Ovary (tissue), 10 donors: ENCODE measurements at regions of chr1 and their contacts with region 1.

Region 1: DNA sequence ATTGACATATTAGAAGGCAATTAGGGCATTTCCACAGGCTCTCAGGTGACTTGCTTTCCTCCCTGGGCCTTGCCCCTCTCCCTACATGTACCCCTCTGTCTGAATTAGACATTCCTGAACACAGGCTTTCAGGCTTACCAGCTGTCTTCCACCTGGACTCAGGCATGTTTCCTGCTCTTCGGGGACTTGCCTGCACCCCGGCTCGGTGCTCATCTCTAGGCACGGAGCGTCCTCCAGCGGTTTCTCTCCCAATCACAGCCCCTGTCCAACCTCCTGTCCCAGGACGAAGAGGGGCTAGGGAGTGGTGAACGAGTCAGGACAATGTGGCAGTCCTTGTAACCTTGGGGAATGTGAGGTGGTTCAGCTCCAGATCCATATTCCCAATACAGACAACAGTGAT is 4.2 kb downstream of the PROK1 start:
- DNase-seq: no peak
- H3K4me3 ChIP-seq: no peak overlapping the region
- H3K27ac ChIP-seq: no peak overlapping the region
- H3K4me1 ChIP-seq: peaks cover 17% of the 10 kb centered on the region
- H3K27me3 ChIP-seq: no peaks in the 10 kb centered on the region
- CTCF ChIP-seq: no peak
- EP300 ChIP-seq: no peak
- POLR2A ChIP-seq: no peak

Region 2: DNA sequence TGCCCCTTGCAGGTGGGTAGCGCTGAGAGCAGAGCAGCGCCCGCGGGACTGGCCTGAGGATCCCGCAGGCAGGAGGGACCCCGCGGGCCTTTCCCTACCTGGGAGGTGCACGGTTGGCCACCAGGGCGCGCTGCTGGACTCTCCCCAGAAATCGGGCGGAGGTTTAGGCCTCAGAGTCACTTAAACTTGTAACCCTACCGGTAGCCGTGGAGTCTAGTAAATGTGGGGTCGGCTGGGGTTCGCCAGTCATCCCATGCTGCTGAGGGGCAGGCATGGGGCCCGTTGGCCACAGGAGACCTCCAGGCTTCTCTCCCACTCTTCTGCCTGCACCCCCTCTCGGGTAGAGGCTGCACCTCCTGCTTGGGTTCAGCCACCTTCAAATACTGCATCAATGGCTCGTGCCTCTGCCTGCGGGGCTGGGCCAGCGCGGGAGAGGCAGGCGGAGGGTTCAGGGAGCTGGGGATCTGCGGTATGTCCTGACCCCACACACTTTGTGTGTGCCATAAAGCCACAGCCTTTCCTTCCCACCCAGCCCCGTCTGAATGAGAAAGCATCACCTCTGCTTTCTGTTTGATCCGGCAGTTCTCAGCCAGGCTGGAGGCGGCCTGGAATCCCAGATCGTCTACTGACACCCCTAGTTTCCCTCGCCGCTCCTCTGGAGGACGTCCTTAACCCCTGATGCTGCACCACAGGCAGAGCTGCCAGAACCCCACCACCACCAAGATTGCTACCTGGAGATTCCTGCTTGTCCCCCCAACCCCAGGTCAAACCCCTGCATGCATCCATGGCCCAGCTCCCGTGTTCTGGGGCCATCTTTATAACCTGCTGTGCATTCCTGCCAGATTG is 811.5 kb before region 1 on chr1:
- intact Hi-C with region 1: no loop called
- DNase-seq: peak; percentile 75 to 92 (median 88)
- H3K4me3 ChIP-seq: no peak overlapping the region
- H3K27ac ChIP-seq: peak overlapping the region in 1 of 2 donors; percentile 35
- H3K4me1 ChIP-seq: no peaks in the 10 kb centered on the region
- H3K27me3 ChIP-seq: no peaks in the 10 kb centered on the region
- CTCF ChIP-seq: peak; percentile 63 to 87 (median 71)
- EP300 ChIP-seq: no peak
- POLR2A ChIP-seq: no peak

Region 3: GRCh38 chr1:110412576-110412975 is 42.6 kb before region 1 on chr1:
- intact Hi-C with region 1: loop called in 3 of 4 experiments (anchors 2 to 5 kb)
- DNase-seq: peak; percentile 87 to 93 (median 90)
- H3K4me3 ChIP-seq: no peak overlapping the region
- H3K27ac ChIP-seq: peak overlapping the region; percentile 61 to 76
- H3K4me1 ChIP-seq: peaks cover 16% of the 10 kb centered on the region
- H3K27me3 ChIP-seq: no peaks in the 10 kb centered on the region
- CTCF ChIP-seq: peak; percentile 68 to 92 (median 91)
- EP300 ChIP-seq: no peak
- POLR2A ChIP-seq: peak; percentile 29

Region 4: DNA sequence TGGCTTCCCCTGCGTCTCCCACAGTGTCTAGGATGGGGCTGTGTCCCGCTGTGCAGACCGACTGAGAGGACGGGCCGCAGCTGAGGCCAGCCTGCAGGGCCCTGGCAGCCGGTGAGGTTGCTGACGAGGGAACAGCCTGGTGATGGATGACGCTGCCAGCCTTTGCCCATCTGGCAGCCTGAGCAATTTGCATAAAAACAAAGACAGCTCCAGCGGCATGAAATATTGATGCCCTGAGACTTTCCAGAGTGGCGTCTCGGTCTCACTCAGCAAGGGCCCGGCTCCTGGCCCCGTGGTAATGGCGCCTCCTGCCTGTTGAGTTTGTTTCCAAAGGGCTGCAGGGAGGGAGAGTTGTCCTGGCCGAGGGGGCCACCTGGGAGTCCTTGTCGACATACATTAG is 82.9 kb after region 1 on chr1:
- intact Hi-C with region 1: no loop called
- DNase-seq: no peak
- H3K4me3 ChIP-seq: no peak overlapping the region
- H3K27ac ChIP-seq: no peak overlapping the region
- H3K4me1 ChIP-seq: no peaks in the 10 kb centered on the region
- H3K27me3 ChIP-seq: no peaks in the 10 kb centered on the region
- CTCF ChIP-seq: no peak
- EP300 ChIP-seq: no peak
- POLR2A ChIP-seq: no peak